ENCODE measurements at regions of chr18 and their contacts with region 1.

Region 1: DNA sequence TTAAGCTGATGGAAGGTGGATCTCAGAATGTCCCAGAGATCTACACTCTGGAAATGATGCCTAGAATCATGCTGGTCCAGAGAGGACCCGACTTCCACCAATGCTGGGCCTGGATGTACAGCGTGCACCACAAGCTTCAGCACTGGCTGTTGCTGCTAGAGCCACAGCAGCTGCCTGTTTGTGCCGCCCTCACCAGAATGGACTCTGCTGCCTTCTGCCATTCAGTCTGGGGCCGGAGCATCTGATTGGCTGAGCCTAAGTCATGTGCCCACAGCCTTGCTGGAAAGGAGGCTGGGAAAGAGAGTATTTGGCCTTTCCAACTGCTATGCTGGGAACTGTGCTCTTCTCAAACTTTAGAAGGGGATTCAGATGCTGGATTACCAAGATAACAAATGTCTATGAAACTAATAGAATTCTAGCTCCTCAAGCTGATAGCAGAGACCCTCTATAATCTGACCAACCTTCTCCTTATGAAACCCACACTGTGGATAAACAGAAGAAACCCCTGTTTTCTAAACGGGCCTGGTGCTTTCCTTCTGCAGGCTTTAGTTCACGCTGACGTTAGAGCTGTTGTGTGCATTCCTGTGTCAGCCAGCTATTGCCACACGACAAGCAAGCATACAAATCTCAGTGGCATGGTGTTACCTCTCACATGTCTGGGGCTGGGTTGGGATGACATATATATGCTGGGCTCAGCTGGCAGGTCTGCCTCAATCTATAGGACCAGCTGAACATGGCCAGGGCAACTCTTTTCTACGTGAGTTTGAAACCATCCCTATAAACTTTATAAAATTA is 4.1 kb upstream of the LOXHD1 start:
- DNase-seq: no peak
- ATAC-seq: peak in 3 of 8 donors; percentile 27 to 47 (median 45)
- H3K4me3 ChIP-seq: no peak overlapping the region
- H3K27ac ChIP-seq: no peak overlapping the region
- H3K4me1 ChIP-seq: no peaks in the 10 kb centered on the region
- H3K27me3 ChIP-seq: no peaks in the 10 kb centered on the region
- CTCF ChIP-seq: no peak

Region 2: DNA sequence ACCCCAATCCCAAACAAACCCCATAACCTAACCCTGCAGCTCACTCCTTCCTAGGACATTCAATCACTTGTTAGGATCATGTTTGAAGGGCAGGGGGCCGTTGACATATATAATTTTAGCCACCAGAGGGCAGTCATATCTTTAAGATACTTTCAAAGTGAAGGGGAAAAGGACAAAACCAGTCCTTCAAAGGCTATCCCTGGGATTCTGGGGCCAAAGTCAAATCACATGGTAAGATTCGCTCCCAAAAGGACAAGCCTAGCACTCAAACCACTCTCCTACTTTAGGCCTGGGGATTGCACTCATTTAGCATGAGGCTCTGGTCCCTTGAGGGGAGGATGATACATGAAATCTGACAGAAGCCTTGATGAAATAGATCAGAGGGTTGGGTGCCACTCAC is 512.3 kb before region 1 on chr18:
- intact Hi-C with region 1: loop called in 9 of 10 experiments (anchors 1 to 10 kb)
- DNase-seq: peak in 1 of 2 donors; percentile 29
- ATAC-seq: peak in 4 of 8 donors; percentile 29 to 63 (median 42)
- H3K4me3 ChIP-seq: no peak overlapping the region
- H3K27ac ChIP-seq: no peak overlapping the region
- H3K4me1 ChIP-seq: peaks cover 0 to 7% (median 0%) of the 10 kb centered on the region in 9 donors
- H3K27me3 ChIP-seq: no peaks in the 10 kb centered on the region
- CTCF ChIP-seq: peak; percentile 55 to 77 (median 67)

Region 3: GRCh38 chr18:46155641-46156051 is 505.5 kb before region 1 on chr18:
- intact Hi-C with region 1: loop called in 2 of 10 experiments (anchors 5 to 10 kb)
- DNase-seq: no peak
- ATAC-seq: no peak
- H3K4me3 ChIP-seq: no peak overlapping the region
- H3K27ac ChIP-seq: peak overlapping the region in 1 of 10 donors; percentile 41
- H3K4me1 ChIP-seq: peaks cover 0 to 18% (median 0%) of the 10 kb centered on the region in 9 donors
- H3K27me3 ChIP-seq: no peaks in the 10 kb centered on the region
- CTCF ChIP-seq: no peak

Region 4: DNA sequence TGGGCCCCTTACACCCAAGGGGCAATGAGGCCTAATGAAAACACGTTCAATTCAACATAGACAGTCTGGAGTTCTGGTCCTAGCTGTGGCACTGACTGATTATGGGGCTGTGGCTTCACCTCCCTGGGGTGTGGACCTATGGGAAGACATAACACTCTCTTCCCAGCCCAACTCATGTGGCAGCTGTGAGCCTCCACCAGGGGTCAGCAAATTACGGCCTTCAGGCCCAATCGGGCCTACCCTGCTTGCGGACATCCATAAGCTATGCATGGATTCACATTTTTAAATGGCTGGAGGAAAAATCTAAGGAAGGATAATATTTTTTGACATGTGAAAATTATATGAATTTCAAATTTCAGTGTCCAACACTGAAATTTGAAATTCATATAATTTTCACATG is 105.4 kb before region 1 on chr18:
- intact Hi-C with region 1: loop called (anchors 1 to 10 kb)
- DNase-seq: peak; percentile 11 to 36
- ATAC-seq: peak; percentile 55 to 85 (median 72)
- H3K4me3 ChIP-seq: no peak overlapping the region
- H3K27ac ChIP-seq: no peak overlapping the region
- H3K4me1 ChIP-seq: no peaks in the 10 kb centered on the region
- H3K27me3 ChIP-seq: no peaks in the 10 kb centered on the region
- CTCF ChIP-seq: peak; percentile 37 to 75 (median 65)

Region 5: GRCh38 chr18:46711444-46711863 is 50.3 kb after region 1 on chr18:
- intact Hi-C with region 1: loop called in 1 of 10 experiments (anchors 5 kb)
- DNase-seq: peak in 1 of 2 donors; percentile 68
- ATAC-seq: peak; percentile 64 to 94 (median 86)
- H3K4me3 ChIP-seq: no peak overlapping the region
- H3K27ac ChIP-seq: peak overlapping the region in 7 of 10 donors; percentile 63 to 87 (median 84)
- H3K4me1 ChIP-seq: peaks cover 7 to 36% (median 20%) of the 10 kb centered on the region in 9 donors
- H3K27me3 ChIP-seq: no peaks in the 10 kb centered on the region
- CTCF ChIP-seq: no peak

Region 6: GRCh38 chr18:47081578-47081977 is 420.4 kb after region 1 on chr18:
- intact Hi-C with region 1: no loop called
- DNase-seq: no peak
- ATAC-seq: no peak
- H3K4me3 ChIP-seq: no peak overlapping the region
- H3K27ac ChIP-seq: no peak overlapping the region
- H3K4me1 ChIP-seq: no peaks in the 10 kb centered on the region
- H3K27me3 ChIP-seq: no peaks in the 10 kb centered on the region
- CTCF ChIP-seq: no peak